ENCODE measurements at regions of chr17 and their contacts with region 1.

Region 1: DNA sequence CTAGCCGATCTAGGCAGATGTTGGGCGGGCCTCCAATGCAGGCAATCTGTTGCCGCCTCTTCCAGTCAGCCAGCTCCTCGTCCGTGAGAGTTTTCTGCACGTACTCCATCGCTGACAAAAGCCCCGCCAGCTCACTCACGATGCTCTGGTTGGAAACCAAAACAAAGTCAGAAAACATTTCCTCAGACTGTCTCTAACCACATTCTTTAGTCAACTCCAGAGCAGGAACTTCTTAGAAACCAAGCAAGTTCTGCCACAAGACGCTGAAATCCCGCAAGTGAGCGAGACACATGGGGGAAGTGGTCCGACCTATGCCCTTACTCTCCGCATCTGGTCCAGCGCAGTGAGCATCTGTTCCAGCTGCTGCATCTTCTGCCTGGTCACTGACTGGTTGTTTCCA is 49.1 kb downstream of the STAT5A start:
- DNase-seq: no peak

Region 2: DNA sequence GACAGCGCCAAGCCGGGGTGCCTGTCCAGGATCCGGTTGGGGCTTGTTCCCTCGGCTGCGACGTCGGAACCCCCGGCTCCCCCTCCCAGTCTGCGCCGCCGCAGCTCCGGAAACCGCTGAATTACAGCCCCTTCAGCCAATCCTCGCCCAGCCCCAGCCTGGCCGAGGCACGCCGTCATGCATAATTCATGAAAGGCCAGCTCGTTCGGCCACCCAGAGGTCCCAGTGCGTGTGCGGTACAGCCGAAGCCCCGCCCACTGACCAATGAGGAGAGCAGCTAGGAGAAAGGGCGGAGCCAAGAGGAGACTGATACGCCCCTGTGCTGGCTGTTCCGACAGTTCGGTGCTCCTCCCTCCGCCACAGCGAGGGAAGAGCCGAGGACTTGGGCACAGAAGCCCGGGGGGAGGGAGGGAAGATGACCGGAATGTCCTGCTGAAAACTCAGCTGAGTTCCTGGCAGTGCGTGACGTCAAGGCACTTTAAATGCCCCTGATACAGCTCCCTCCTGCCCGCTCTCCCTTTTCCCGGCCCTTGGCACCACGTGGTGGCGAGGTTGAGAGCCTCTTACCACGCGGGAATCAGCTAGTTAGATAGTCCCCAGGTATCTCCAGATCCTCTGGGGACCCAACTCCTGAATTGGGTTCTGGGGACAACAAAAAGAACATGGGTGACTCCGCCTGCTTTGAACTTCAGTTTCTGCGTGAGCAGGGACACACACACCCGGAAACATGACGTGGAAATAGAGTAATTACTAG is 51.1 kb after region 1 on chr17 and contains the start of gene STAT3:
- in situ Hi-C with region 1: loop called (anchors 10 kb)
- DNase-seq: peak; percentile 100

Measured in KBM-7 (cell line).